PC-3 (cell line): ENCODE measurements at regions of chr3 and their contacts with region 1.

Region 1: GRCh38 chr3:112086076-112086854 is at the start of gene C3orf52:
- DNase-seq: peak; percentile 91
- ATAC-seq: peak; percentile 88
- H3K4me3 ChIP-seq: peak within 1 kb of the TSS; percentile 94
- H3K27ac ChIP-seq: peak within 1 kb of the TSS; percentile 93
- H3K4me1 ChIP-seq: peaks cover 44% of the 10 kb centered on the region
- H3K27me3 ChIP-seq: no peaks in the 10 kb centered on the region
- CTCF ChIP-seq: no peak; the same call in 1 of the 2 replicates
- total RNA-seq, gene C3orf52: 14.8 and 16.7 TPM in 2 replicates

Region 2: DNA sequence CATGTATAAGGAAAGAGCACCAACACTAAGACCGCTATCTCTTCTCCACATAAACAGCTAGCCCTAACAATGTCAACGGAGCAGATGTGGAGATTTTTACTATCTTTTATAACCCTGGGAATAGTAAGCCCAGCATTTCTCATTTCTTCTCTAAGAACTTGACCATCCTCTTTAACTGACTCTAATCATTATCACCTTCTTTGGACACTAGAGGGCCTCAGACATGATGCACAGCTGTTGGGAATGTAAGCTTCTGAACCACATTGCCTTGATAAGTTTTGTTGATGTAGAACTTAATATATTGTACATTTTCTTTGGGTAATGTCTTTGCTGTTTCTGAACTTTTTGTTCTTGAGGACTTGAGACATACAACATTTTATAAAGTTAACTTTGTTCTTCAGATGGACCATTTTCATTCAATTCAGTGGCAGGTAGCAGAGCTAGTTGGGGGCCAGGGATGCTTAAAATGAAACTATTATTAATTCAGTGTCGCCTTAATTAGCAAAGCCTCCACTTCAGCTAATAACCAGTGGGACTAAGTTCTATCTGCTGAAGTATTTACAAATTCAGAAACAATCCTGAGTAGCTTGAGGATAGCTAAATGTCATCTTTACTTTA is 97.1 kb before region 1 on chr3:
- CTCF ChIA-PET with region 1: interaction called, 3 read pairs
- POLR2A ChIA-PET with region 1: no interaction called
- intact Hi-C with region 1: loop called (anchors 5 kb)
- DNase-seq: peak; percentile 82
- ATAC-seq: peak; percentile 96
- H3K4me3 ChIP-seq: no peak overlapping the region
- H3K27ac ChIP-seq: no peak overlapping the region
- H3K4me1 ChIP-seq: no peaks in the 10 kb centered on the region; the same call in 1 of the 2 replicates
- H3K27me3 ChIP-seq: no peaks in the 10 kb centered on the region
- CTCF ChIP-seq: peak; percentile 94

Region 3: GRCh38 chr3:112032098-112032731 is 54.0 kb before region 1 on chr3:
- CTCF ChIA-PET with region 1: no interaction called
- POLR2A ChIA-PET with region 1: no interaction called
- intact Hi-C with region 1: no loop called
- DNase-seq: no peak
- ATAC-seq: no peak
- H3K4me3 ChIP-seq: no peak overlapping the region
- H3K27ac ChIP-seq: no peak overlapping the region
- H3K4me1 ChIP-seq: no peaks in the 10 kb centered on the region
- H3K27me3 ChIP-seq: no peaks in the 10 kb centered on the region
- CTCF ChIP-seq: no peak

Region 4: GRCh38 chr3:112074721-112075497 is 11.4 kb before region 1 on chr3:
- CTCF ChIA-PET with region 1: no interaction called
- POLR2A ChIA-PET with region 1: no interaction called
- intact Hi-C with region 1: loop called (anchors 1 kb)
- DNase-seq: peak; percentile 98
- ATAC-seq: peak; percentile 96
- H3K4me3 ChIP-seq: peak overlapping the region; percentile 60
- H3K27ac ChIP-seq: peak overlapping the region; percentile 99
- H3K4me1 ChIP-seq: peaks cover 36% of the 10 kb centered on the region
- H3K27me3 ChIP-seq: no peaks in the 10 kb centered on the region
- CTCF ChIP-seq: no peak